SK-N-SH (cell line): ENCODE measurements at regions of chr17 and their contacts with region 1.

Region 1: DNA sequence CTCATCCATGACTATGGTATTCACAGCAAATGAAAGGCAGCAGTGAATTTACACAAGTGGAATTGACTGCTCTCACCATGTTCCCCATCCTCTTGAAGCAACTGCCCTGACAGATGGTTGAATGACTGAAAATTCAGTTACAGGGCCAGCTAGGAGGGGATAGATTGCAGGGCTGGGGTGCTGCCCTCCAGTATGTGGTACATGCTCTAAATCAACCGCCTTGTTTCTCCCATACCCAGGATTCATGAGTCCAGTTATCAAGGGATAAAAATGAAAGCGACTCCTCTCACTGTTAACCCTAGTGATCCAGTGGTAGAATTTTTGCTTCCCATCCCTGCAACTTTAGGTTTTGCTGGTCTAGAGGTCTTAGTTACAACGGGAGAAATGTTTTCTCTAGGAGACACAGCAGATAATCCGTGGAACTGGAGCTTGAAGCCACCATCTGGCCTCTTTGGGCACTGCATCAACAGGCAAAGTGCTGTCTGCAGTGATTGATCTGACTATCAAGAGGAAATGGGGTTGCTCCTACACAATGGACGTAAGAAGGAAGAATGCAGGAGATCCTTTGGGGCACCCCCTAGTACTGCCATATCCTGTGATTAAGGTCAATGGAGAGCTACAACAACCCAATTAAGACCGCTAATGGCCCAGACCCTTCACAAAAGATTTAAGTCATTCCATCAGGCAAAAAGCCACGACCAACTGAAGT is 32.0 kb downstream of the SCPEP1 start:
- DNase-seq: peak; percentile 76
- H3K4me3 ChIP-seq: 0 out of 4 replicates have a peak overlapping the region, but pooled peaks of 1 of the 2 experiments have one; percentile 20
- H3K27ac ChIP-seq: no peak overlapping the region
- H3K4me1 ChIP-seq: peaks cover 0 to 5% of the 10 kb centered on the region in 2 experiments; a peak in 1 of 4 replicates
- H3K27me3 ChIP-seq: no peaks in the 10 kb centered on the region
- CTCF ChIP-seq: peak; percentile 76
- EP300 ChIP-seq: no peak
- RAD21 ChIP-seq: peak; percentile 76

Region 2: GRCh38 chr17:57021226-57021940 is 11.5 kb after region 1 on chr17:
- CTCF ChIA-PET with region 1: interaction called, 29 read pairs
- POLR2A ChIA-PET with region 1: no interaction called
- DNase-seq: no peak
- H3K4me3 ChIP-seq: no peak overlapping the region
- H3K27ac ChIP-seq: no peak overlapping the region
- H3K4me1 ChIP-seq: no peaks in the 10 kb centered on the region
- H3K27me3 ChIP-seq: no peaks in the 10 kb centered on the region
- CTCF ChIP-seq: no peak
- EP300 ChIP-seq: no peak
- RAD21 ChIP-seq: no peak

Region 3: GRCh38 chr17:57071991-57072944 is 62.4 kb after region 1 on chr17:
- CTCF ChIA-PET with region 1: interaction called, 12 read pairs
- POLR2A ChIA-PET with region 1: no interaction called
- DNase-seq: peak; percentile 39
- H3K4me3 ChIP-seq: no peak overlapping the region
- H3K27ac ChIP-seq: no peak overlapping the region; a peak in 1 of 4 replicates
- H3K4me1 ChIP-seq: no peaks in the 10 kb centered on the region
- H3K27me3 ChIP-seq: peaks cover 15% of the 10 kb centered on the region
- CTCF ChIP-seq: no peak
- EP300 ChIP-seq: peak in 1 of 2 experiments; percentile 49; a peak in 1 of 4 replicates
- RAD21 ChIP-seq: no peak